ENCODE measurements at regions of chr11 and their contacts with region 1.

Region 1: DNA sequence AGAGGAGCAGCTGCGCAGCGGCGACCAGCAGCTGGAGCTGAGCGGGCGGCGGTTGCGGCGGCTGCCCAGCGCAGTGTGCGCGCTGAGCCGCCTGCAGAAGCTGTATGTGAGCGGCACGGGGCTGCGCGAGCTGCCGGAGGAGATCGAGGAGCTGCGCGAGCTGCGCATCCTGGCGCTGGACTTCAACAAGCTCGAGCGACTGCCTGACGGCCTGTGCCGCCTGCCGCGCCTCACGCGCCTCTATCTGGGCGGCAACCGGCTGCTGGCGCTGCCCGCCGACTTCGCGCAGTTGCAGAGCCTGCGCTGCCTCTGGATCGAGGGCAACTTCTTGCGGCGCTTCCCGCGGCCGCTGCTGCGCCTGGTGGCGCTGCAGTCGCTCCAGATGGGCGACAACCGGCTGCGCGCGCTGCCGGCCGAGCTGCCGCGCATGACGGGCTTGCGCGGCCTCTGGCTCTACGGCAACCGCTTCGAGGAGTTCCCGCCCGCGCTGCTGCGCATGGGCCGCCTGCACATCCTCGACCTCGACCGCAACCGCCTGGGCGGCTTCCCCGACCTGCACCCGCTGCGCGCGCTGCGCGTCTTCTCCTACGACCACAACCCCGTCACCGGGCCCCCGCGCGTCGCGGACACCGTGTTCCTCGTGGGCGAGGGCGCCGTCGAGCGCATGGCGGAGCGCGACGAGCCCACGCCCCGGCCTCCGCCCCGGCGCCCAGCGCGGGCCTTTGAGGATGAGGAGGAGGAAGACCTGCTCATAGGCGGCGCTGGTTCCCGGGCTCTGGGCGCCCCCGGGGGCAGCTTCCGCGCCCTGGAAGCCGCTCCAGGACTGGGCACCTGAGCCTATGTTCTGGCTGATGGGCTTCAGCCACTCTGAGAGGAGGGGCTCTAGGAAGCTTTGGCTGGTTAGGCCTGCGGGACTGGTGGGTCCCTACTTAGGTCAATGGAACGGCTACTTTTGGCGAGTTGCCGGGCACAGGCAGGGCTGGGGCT is 787 bp downstream of the LRRC10B start:
- DNase-seq: no peak
- H3K4me3 ChIP-seq: peak overlapping the region; percentile 32 to 33
- H3K27ac ChIP-seq: peak overlapping the region; percentile 71
- H3K4me1 ChIP-seq: peaks cover 18% of the 10 kb centered on the region
- H3K27me3 ChIP-seq: peaks cover 8% of the 10 kb centered on the region
- CTCF ChIP-seq: peak in 2 of 3 experiments; percentile 25 to 32
- POLR2A ChIP-seq: no peak

Region 2: DNA sequence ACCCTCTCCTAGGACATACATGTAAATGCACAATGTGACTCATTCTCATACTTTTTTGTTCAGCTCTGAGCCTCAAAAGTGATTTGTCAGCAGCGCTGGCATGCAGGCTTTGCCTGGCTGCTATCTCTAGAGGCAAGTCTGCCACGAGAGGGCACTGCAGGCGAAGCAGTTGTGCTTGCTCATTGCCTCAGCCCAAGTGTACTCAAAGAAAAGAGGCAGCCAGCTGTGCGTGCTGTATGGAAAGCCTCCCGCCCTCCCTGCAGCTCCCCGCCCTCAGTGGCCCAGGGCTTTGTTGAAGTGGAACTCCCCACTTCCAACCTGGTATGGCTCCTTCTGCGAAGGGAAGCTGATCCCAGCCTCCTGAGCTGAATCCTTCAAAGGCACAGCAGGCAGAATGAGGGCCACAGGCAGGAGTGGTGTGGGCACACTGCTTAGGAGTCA is 63.1 kb before region 1 on chr11:
- intact Hi-C with region 1: loop called (anchors 10 kb)
- DNase-seq: peak in 1 of 2 donors; percentile 90
- H3K4me3 ChIP-seq: no peak overlapping the region
- H3K27ac ChIP-seq: peak overlapping the region; percentile 47
- H3K4me1 ChIP-seq: peaks cover 9% of the 10 kb centered on the region
- H3K27me3 ChIP-seq: no peaks in the 10 kb centered on the region
- CTCF ChIP-seq: peak; percentile 56 to 77 (median 75)
- POLR2A ChIP-seq: no peak

Measured in vagina (tissue), 2 donors.